CD8-positive, alpha-beta memory T cell (primary cell): ENCODE measurements at regions of chr11 and their contacts with region 1.

Region 1: GRCh38 chr11:9506489-9507276 is 45.9 kb downstream of the ZNF143 start:
- DNase-seq: peak; percentile 52 to 82 (median 64)
- H3K4me3 ChIP-seq: no peak overlapping the region
- H3K4me3 Mint-ChIP-seq: no peak overlapping the region
- H3K27ac ChIP-seq: no peak overlapping the region
- H3K27ac Mint-ChIP-seq: peak overlapping the region in 3 of 8 donors; percentile 13 to 66 (median 43)
- H3K4me1 ChIP-seq: no peaks in the 10 kb centered on the region
- H3K4me1 Mint-ChIP-seq: peaks cover 11 to 19% (median 16%) of the 10 kb centered on the region in 3 donors
- H3K27me3 ChIP-seq: no peaks in the 10 kb centered on the region
- H3K27me3 Mint-ChIP-seq: no peaks in the 10 kb centered on the region

Region 2: GRCh38 chr11:9015677-9016076 is 491.0 kb before region 1 on chr11:
- CTCF ChIA-PET with region 1: interaction called, 44 read pairs
- POLR2A ChIA-PET with region 1: no interaction called
- DNase-seq: peak; percentile 8 to 68 (median 41)
- H3K4me3 ChIP-seq: no peak overlapping the region
- H3K4me3 Mint-ChIP-seq: no peak overlapping the region
- H3K27ac ChIP-seq: no peak overlapping the region
- H3K27ac Mint-ChIP-seq: no peak overlapping the region
- H3K4me1 ChIP-seq: peaks cover 6% of the 10 kb centered on the region
- H3K4me1 Mint-ChIP-seq: peaks cover 8 to 25% (median 11%) of the 10 kb centered on the region in 3 donors
- H3K27me3 ChIP-seq: no peaks in the 10 kb centered on the region
- H3K27me3 Mint-ChIP-seq: peaks cover 5 to 10% of the 10 kb centered on the region in 2 donors

Region 3: DNA sequence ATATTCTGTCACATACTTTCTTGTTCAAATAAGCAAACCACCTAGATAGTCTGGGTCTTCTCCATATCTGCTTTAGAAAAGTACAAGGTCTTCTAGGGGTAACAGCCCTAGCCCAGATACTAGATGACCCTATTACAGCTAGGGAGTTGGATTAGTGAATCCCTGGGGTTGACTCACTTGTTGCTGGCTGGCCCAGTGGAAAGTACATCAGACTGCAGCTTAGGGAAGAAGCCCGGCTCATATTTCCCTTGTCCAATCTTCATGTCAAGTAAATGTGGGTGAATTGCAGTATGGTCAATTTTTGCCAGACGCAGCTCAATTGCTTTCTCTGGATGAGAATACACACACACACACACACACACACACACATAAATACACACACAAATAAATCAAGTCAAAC is 336.2 kb before region 1 on chr11:
- CTCF ChIA-PET with region 1: interaction called, 26 read pairs
- POLR2A ChIA-PET with region 1: no interaction called
- DNase-seq: no peak
- H3K4me3 ChIP-seq: no peak overlapping the region
- H3K4me3 Mint-ChIP-seq: no peak overlapping the region
- H3K27ac ChIP-seq: no peak overlapping the region
- H3K27ac Mint-ChIP-seq: peak overlapping the region in 1 of 8 donors; percentile 78
- H3K4me1 ChIP-seq: no peaks in the 10 kb centered on the region
- H3K4me1 Mint-ChIP-seq: peaks cover 0 to 10% (median 3%) of the 10 kb centered on the region in 3 donors
- H3K27me3 ChIP-seq: no peaks in the 10 kb centered on the region
- H3K27me3 Mint-ChIP-seq: no peaks in the 10 kb centered on the region

Region 4: GRCh38 chr11:9489080-9489765 is 17.5 kb before region 1 on chr11:
- CTCF ChIA-PET with region 1: interaction called, 13 read pairs
- POLR2A ChIA-PET with region 1: interaction called, 6 read pairs
- DNase-seq: no peak
- H3K4me3 ChIP-seq: no peak overlapping the region
- H3K4me3 Mint-ChIP-seq: no peak overlapping the region
- H3K27ac ChIP-seq: no peak overlapping the region
- H3K27ac Mint-ChIP-seq: peak overlapping the region in 5 of 8 donors; percentile 19 to 75 (median 55)
- H3K4me1 ChIP-seq: no peaks in the 10 kb centered on the region
- H3K4me1 Mint-ChIP-seq: peaks cover 0 to 9% (median 2%) of the 10 kb centered on the region in 3 donors
- H3K27me3 ChIP-seq: no peaks in the 10 kb centered on the region
- H3K27me3 Mint-ChIP-seq: no peaks in the 10 kb centered on the region